ENCODE measurements at regions of chr1 and their contacts with region 1.

Region 1: DNA sequence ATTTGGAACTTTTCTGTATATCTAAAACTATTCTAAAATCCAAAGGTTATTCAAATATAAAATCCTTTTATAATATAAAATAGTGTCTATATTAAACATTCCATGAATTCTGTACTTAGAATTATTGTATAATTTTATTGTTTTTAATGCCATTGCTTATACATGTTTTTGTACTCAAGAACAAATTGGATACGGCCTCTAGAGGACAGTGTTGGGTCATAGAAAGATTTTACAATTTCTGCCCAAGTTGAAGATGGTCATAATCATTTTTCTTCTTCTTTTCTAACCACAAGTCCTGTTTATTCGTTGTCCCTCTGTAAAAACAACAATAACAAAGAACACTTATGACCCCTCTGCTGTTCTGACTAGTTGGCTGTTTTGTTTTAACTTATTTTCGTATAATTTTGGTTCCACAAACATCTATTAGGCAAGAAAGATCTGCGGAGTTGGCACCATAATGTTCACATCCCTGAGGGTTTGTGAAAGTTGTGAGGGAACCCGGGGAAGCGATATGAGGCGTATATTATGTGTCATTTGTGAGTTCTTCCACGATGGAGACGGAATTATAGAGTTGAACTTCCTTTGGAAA is 75.7 kb upstream of the KIF26B start:
- DNase-seq: peak; percentile 29
- ATAC-seq: no peak
- H3K4me3 ChIP-seq: no peak overlapping the region
- H3K27ac ChIP-seq: no peak overlapping the region
- H3K4me1 ChIP-seq: no peaks in the 10 kb centered on the region
- H3K27me3 ChIP-seq: no peaks in the 10 kb centered on the region
- CTCF ChIP-seq: peak; percentile 72
- EP300 ChIP-seq: no peak
- POLR2A ChIP-seq: no peak
- RAD21 ChIP-seq: peak; percentile 63

Region 2: DNA sequence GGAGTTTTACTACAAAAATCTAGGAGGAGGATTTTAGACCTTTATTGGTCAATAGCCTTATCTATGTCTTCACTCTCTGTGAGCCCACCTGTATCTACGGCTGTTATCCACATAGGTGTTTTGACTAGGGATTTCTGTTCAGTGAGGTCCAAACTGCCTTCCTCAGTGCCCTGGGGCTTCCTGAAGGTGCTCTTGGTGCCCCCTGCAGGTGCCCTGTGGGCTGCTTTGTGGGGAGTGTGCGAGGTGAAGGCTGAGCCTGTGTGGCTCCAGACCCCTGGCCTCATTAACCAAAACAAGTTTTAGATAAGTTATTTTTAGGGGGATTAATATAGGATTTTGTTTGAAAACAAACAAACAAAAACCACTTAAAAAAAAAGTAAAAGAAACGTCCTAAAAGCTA is 198.2 kb after region 1 on chr1:
- CTCF ChIA-PET with region 1: interaction called, 5 read pairs
- POLR2A ChIA-PET with region 1: no interaction called
- in situ Hi-C with region 1: loop called (anchors 10 kb)
- intact Hi-C with region 1: loop called (anchors 2 kb)
- DNase-seq: peak; percentile 27
- ATAC-seq: peak; percentile 98
- H3K4me3 ChIP-seq: no peak overlapping the region
- H3K27ac ChIP-seq: no peak overlapping the region
- H3K4me1 ChIP-seq: peaks cover 10% of the 10 kb centered on the region; the same call in 1 of the 2 replicates
- H3K27me3 ChIP-seq: no peaks in the 10 kb centered on the region
- CTCF ChIP-seq: peak; percentile 77
- EP300 ChIP-seq: no peak
- POLR2A ChIP-seq: no peak
- RAD21 ChIP-seq: peak; percentile 43